ENCODE measurements at regions of chr7 and their contacts with region 1.

Region 1: GRCh38 chr7:84194543-84195271 is at the start of gene SEMA3A:
- DNase-seq: peak; percentile 66 to 67
- H3K4me3 ChIP-seq: peak within 1 kb of the TSS; percentile 58
- H3K4me3 Mint-ChIP-seq: peak within 1 kb of the TSS; percentile 83
- H3K27ac Mint-ChIP-seq: peak within 1 kb of the TSS; percentile 45
- H3K4me1 ChIP-seq: peaks cover 14% of the 10 kb centered on the region
- H3K4me1 Mint-ChIP-seq: peaks cover 24% of the 10 kb centered on the region
- H3K27me3 ChIP-seq: no peaks in the 10 kb centered on the region
- H3K27me3 Mint-ChIP-seq: no peaks in the 10 kb centered on the region
- CTCF ChIP-seq: no peak
- total RNA-seq, gene SEMA3A: 55.1 and 55.4 TPM in 2 replicates

Region 2: DNA sequence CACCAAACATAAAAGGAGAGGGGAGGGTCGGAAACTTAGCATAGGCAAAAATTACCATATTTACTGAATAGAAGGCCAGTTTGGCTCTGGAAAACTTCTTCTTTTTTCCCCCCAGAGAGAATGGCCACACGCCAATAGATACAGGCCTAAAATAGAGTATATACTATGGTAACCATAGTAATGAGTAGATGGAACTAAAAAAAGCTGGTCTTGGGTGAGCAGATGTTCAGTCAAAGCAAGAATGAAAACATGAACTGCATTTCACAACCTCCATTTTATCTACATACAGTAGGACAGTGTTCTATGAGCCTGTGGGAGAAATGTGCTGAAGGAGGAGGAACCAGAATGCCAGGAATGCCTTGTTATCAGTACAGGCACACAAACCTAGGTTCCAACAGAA is 141.6 kb after region 1 on chr7:
- CTCF ChIA-PET with region 1: no interaction called
- POLR2A ChIA-PET with region 1: no interaction called
- intact Hi-C with region 1: loop called (anchors 5 kb)
- DNase-seq: peak; percentile 66 to 68
- H3K4me3 ChIP-seq: no peak overlapping the region
- H3K4me3 Mint-ChIP-seq: peak overlapping the region; percentile 8
- H3K27ac Mint-ChIP-seq: peak overlapping the region; percentile 55
- H3K4me1 ChIP-seq: peaks cover 21% of the 10 kb centered on the region
- H3K4me1 Mint-ChIP-seq: peaks cover 8% of the 10 kb centered on the region
- H3K27me3 ChIP-seq: no peaks in the 10 kb centered on the region
- H3K27me3 Mint-ChIP-seq: no peaks in the 10 kb centered on the region
- CTCF ChIP-seq: no peak

Region 3: DNA sequence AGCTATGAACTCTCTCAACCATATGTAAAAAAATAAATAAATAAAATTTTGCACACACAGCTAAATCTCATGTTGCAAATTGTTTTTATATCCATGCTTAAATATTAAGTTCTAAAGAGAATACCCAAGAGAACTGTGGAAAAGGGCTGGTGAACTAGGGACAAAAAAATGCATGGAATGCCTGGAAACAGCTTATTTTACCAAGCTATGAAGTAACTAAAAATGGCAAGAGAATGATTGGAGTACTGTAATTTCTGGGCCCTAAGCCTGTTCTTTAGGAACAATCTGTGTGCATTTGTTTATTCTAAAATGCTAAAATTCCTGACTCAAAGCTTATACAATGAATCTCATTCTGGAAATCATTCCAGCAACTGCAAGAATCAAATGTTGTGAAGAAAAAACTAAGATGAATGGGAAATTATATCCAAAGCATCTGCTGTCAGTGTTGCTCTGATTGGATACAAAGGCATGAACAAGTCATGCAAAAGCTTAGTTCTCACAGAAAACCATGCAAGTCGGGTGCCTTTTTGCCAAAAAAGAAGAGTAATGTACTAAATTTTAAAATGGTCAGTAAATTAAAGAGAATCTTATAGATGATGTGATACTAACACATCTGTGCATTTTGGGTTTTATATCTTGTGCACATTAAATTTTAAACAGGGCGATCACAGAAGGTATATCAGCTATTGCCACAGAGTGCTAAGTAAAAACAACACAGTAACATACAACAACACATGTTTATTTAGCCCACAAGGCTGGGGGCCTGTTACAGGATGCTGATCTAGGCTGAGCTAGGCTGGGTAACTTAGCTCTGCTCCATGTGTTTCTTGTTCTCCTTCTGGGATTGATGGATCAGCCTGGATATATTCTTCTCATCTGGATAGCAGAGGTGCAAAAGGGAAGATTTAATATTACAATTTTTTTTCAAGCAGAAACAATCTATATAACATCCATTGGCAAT is 453.4 kb after region 1 on chr7:
- CTCF ChIA-PET with region 1: no interaction called
- POLR2A ChIA-PET with region 1: no interaction called
- intact Hi-C with region 1: loop called (anchors 10 kb)
- DNase-seq: no peak
- H3K4me3 ChIP-seq: no peak overlapping the region
- H3K4me3 Mint-ChIP-seq: no peak overlapping the region
- H3K27ac Mint-ChIP-seq: no peak overlapping the region
- H3K4me1 ChIP-seq: no peaks in the 10 kb centered on the region; the same call in 1 of the 2 replicates
- H3K4me1 Mint-ChIP-seq: no peaks in the 10 kb centered on the region
- H3K27me3 ChIP-seq: no peaks in the 10 kb centered on the region
- H3K27me3 Mint-ChIP-seq: no peaks in the 10 kb centered on the region
- CTCF ChIP-seq: no peak

Measured in Caco-2 (cell line).